WTC11 (cell line): ENCODE measurements at regions of chr3 and their contacts with region 1.

Region 1: GRCh38 chr3:70120357-70121121 is 121.0 kb downstream of the SAMMSON start:
- DNase-seq: peak; percentile 88
- ATAC-seq: peak; percentile 94
- H3K4me3 Mint-ChIP-seq: no peak overlapping the region
- H3K27ac Mint-ChIP-seq: no peak overlapping the region
- H3K4me1 Mint-ChIP-seq: peaks cover 4% of the 10 kb centered on the region
- H3K27me3 Mint-ChIP-seq: no peaks in the 10 kb centered on the region
- CTCF ChIP-seq: peak; percentile 71

Region 2: DNA sequence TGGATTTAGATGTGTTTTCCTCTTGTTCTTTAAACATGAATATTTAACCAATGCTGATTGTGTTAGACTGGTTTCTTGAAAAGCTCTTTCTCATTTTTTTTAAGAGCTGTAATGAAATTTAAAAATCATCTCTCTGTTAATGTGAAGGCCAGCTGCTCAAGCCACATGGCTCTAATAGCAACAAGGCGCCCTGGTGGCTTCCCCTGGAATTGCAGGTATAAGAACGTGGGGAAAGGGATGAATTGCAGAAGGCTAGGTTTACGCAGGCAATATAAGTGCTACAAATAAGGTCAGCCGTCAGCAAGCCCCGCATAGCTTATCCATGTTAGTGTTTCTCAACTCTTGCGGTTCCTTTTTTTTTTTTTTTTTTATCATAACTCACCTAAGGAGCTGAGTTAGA is 12.5 kb before region 1 on chr3:
- CTCF ChIA-PET with region 1: interaction called, 22 read pairs
- POLR2A ChIA-PET with region 1: no interaction called
- DNase-seq: peak; percentile 80
- ATAC-seq: peak; percentile 88
- H3K4me3 Mint-ChIP-seq: no peak overlapping the region
- H3K27ac Mint-ChIP-seq: no peak overlapping the region
- H3K4me1 Mint-ChIP-seq: peaks cover 11% of the 10 kb centered on the region
- H3K27me3 Mint-ChIP-seq: no peaks in the 10 kb centered on the region; the same call in 1 of the 2 replicates
- CTCF ChIP-seq: peak; percentile 64

Region 3: DNA sequence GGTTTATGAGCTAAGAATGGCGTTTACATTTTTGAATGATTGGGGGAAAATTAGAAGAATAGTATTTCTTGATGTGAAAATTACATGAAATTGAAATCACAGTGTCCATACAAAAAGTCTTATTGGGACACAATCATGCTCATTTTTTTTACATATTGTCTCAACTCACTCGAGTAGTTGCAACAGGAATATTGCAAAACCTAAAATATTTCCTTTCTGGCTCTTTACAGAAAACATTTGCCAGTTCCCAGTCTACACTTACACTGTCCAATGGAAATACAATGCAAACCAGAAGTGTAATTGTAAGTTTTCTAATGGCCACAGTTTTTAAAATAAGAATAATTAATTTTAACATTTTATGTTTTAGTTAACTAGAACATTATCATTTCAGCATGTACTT is 16.8 kb after region 1 on chr3:
- CTCF ChIA-PET with region 1: interaction called, 12 read pairs
- POLR2A ChIA-PET with region 1: no interaction called
- DNase-seq: no peak
- ATAC-seq: no peak
- H3K4me3 Mint-ChIP-seq: no peak overlapping the region
- H3K27ac Mint-ChIP-seq: no peak overlapping the region
- H3K4me1 Mint-ChIP-seq: peaks cover 7% of the 10 kb centered on the region
- H3K27me3 Mint-ChIP-seq: no peaks in the 10 kb centered on the region
- CTCF ChIP-seq: no peak

Region 4: GRCh38 chr3:70149714-70150400 is 29.3 kb after region 1 on chr3:
- CTCF ChIA-PET with region 1: interaction called, 10 read pairs
- POLR2A ChIA-PET with region 1: no interaction called
- DNase-seq: no peak
- ATAC-seq: no peak
- H3K4me3 Mint-ChIP-seq: no peak overlapping the region
- H3K27ac Mint-ChIP-seq: no peak overlapping the region
- H3K4me1 Mint-ChIP-seq: peaks cover 20% of the 10 kb centered on the region
- H3K27me3 Mint-ChIP-seq: no peaks in the 10 kb centered on the region; the same call in 1 of the 2 replicates
- CTCF ChIP-seq: no peak